ENCODE measurements at regions of chr16 and their contacts with region 1.

Region 1: GRCh38 chr16:2846511-2847310 is 11.3 kb downstream of the PRSS22 start:
- DNase-seq: peak; percentile 84 to 87
- H3K4me3 ChIP-seq: no peak overlapping the region
- H3K4me3 Mint-ChIP-seq: peak overlapping the region; percentile 37
- H3K27ac Mint-ChIP-seq: peak overlapping the region; percentile 75
- H3K4me1 ChIP-seq: peaks cover 39% of the 10 kb centered on the region
- H3K4me1 Mint-ChIP-seq: peaks cover 25% of the 10 kb centered on the region
- H3K27me3 ChIP-seq: no peaks in the 10 kb centered on the region
- H3K27me3 Mint-ChIP-seq: no peaks in the 10 kb centered on the region
- CTCF ChIP-seq: no peak

Region 2: GRCh38 chr16:2531767-2532493 is 314.8 kb before region 1 on chr16:
- CTCF ChIA-PET with region 1: no interaction called
- POLR2A ChIA-PET with region 1: no interaction called
- intact Hi-C with region 1: no loop called
- DNase-seq: peak; percentile 97
- H3K4me3 ChIP-seq: peak overlapping the region; percentile 78
- H3K4me3 Mint-ChIP-seq: peak overlapping the region; percentile 86
- H3K27ac Mint-ChIP-seq: peak overlapping the region; percentile 94
- H3K4me1 ChIP-seq: peaks cover 13% of the 10 kb centered on the region
- H3K4me1 Mint-ChIP-seq: no peaks in the 10 kb centered on the region
- H3K27me3 ChIP-seq: no peaks in the 10 kb centered on the region
- H3K27me3 Mint-ChIP-seq: no peaks in the 10 kb centered on the region
- CTCF ChIP-seq: no peak

Region 3: DNA sequence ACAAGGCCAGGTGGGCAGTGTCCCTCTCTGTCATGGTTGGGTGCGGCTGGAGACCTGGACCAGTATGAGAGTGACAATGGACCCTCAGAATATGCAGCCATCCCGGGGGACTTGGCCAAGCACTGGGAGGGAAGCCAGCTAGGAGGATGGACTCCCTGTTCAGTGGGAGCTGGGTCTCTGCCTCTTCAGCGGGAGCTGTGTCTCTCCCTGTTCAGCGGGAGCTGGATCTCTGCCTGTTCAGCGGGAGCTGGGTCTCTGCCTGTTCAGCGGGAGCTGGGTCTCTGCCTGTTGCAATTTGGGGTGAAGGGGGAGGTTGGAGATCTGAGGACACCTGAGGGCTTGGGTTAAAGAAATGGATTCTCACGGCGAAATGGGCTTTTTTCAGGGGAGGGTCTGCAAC is 55.5 kb before region 1 on chr16:
- CTCF ChIA-PET with region 1: no interaction called
- POLR2A ChIA-PET with region 1: no interaction called
- intact Hi-C with region 1: loop called (anchors 5 kb)
- DNase-seq: no peak
- H3K4me3 ChIP-seq: no peak overlapping the region
- H3K4me3 Mint-ChIP-seq: no peak overlapping the region
- H3K27ac Mint-ChIP-seq: no peak overlapping the region
- H3K4me1 ChIP-seq: peaks cover 22% of the 10 kb centered on the region
- H3K4me1 Mint-ChIP-seq: peaks cover 16% of the 10 kb centered on the region
- H3K27me3 ChIP-seq: no peaks in the 10 kb centered on the region
- H3K27me3 Mint-ChIP-seq: no peaks in the 10 kb centered on the region
- CTCF ChIP-seq: no peak

Region 4: GRCh38 chr16:2799866-2800239 is 46.9 kb before region 1 on chr16:
- CTCF ChIA-PET with region 1: no interaction called
- POLR2A ChIA-PET with region 1: no interaction called
- intact Hi-C with region 1: loop called (anchors 1 kb)
- DNase-seq: peak; percentile 78 to 91
- H3K4me3 ChIP-seq: no peak overlapping the region
- H3K4me3 Mint-ChIP-seq: no peak overlapping the region
- H3K27ac Mint-ChIP-seq: peak overlapping the region; percentile 71
- H3K4me1 ChIP-seq: peaks cover 35% of the 10 kb centered on the region
- H3K4me1 Mint-ChIP-seq: peaks cover 24% of the 10 kb centered on the region
- H3K27me3 ChIP-seq: no peaks in the 10 kb centered on the region
- H3K27me3 Mint-ChIP-seq: no peaks in the 10 kb centered on the region
- CTCF ChIP-seq: no peak

Measured in Caco-2 (cell line).